IMR-90 (cell line): ENCODE measurements at regions of chr21 and their contacts with region 1.

Region 1: DNA sequence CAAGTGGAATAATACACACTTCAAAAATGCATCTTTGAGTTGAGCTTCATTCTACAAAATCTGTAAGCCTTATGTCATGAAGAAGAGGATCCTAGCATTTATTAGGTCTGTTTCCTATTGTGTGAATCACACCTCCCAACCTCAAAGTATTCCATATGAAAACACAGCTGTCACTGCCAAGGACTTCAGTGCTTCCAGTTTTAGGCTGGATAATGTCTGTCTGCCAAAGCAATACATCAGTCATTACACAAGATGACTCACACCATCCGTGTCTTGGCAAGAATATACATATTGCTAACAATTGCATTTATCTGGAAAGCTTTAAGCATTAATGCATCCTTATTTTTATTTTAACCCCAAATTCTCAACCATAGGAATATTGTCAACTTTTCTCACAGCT is 125.7 kb upstream of the TMPRSS15 start:
- DNase-seq: no peak
- ATAC-seq: no peak
- H3K4me3 ChIP-seq: no peak overlapping the region
- H3K27ac ChIP-seq: no peak overlapping the region
- H3K4me1 ChIP-seq: no peaks in the 10 kb centered on the region
- H3K27me3 ChIP-seq: no peaks in the 10 kb centered on the region
- CTCF ChIP-seq: no peak
- POLR2A ChIP-seq: no peak
- RAD21 ChIP-seq: no peak

Region 2: GRCh38 chr21:18608226-18608625 is 79.0 kb after region 1 on chr21:
- CTCF ChIA-PET with region 1: no interaction called
- POLR2A ChIA-PET with region 1: no interaction called
- dilution Hi-C with region 1: no loop called
- in situ Hi-C with region 1: no loop called
- intact Hi-C with region 1: no loop called
- DNase-seq: no peak
- ATAC-seq: no peak
- H3K4me3 ChIP-seq: no peak overlapping the region
- H3K27ac ChIP-seq: no peak overlapping the region
- H3K4me1 ChIP-seq: no peaks in the 10 kb centered on the region
- H3K27me3 ChIP-seq: no peaks in the 10 kb centered on the region
- CTCF ChIP-seq: no peak
- POLR2A ChIP-seq: no peak
- RAD21 ChIP-seq: no peak

Region 3: GRCh38 chr21:18646116-18646515 is 116.9 kb after region 1 on chr21:
- CTCF ChIA-PET with region 1: interaction called, 3 read pairs
- POLR2A ChIA-PET with region 1: no interaction called
- dilution Hi-C with region 1: no loop called
- in situ Hi-C with region 1: loop called (anchors 25 kb)
- intact Hi-C with region 1: no loop called
- DNase-seq: no peak
- ATAC-seq: no peak
- H3K4me3 ChIP-seq: no peak overlapping the region
- H3K27ac ChIP-seq: no peak overlapping the region
- H3K4me1 ChIP-seq: no peaks in the 10 kb centered on the region
- H3K27me3 ChIP-seq: no peaks in the 10 kb centered on the region
- CTCF ChIP-seq: no peak
- POLR2A ChIP-seq: no peak
- RAD21 ChIP-seq: no peak